Activated CD8-positive, alpha-beta T cell treated with anti-CD3 and anti-CD28 coated beads for 36 hours (primary cell): ENCODE measurements at regions of chrX and their contacts with region 1.

Region 1: GRCh38 chrX:103831803-103832544 is at the start of gene RAB9B:
- DNase-seq: peak; percentile 74
- ATAC-seq: peak; percentile 99
- H3K4me3 Mint-ChIP-seq: peak within 1 kb of the TSS; percentile 76
- H3K27ac Mint-ChIP-seq: peak within 1 kb of the TSS; percentile 63
- H3K4me1 Mint-ChIP-seq: peaks cover 3% of the 10 kb centered on the region
- H3K27me3 Mint-ChIP-seq: peaks cover 8% of the 10 kb centered on the region
- CTCF ChIP-seq: no peak
- total RNA-seq, gene RAB9B: 0.38 to 0.45 TPM

Region 2: DNA sequence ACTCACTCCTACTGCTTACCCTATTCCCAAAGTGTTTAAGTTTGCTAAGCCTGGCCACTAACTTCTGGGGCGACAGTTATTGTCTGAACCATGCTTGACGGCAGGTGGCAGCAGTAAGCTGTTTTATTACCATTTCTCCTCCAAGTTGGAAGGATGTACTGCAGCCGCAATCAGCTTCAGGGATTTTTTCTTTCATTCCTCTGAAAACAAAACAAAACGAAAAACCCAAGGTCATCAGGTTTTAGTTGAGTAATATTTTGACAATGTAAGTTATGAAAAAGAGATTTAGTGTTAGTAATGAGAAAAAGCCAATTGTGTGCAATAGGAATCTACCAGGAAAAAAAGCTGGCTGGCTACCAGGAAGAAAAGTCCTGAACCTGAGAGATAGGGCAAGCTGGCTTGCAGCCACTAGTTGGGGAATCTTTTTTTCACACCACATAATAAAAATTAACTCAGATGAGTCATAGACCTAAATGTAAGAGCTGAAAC is 13.2 kb after region 1 on chrX:
- CTCF ChIA-PET with region 1: interaction called, 12 read pairs
- POLR2A ChIA-PET with region 1: interaction called, 5 read pairs
- intact Hi-C with region 1: no loop called
- DNase-seq: peak; percentile 62
- ATAC-seq: peak; percentile 58
- H3K4me3 Mint-ChIP-seq: no peak overlapping the region
- H3K27ac Mint-ChIP-seq: no peak overlapping the region
- H3K4me1 Mint-ChIP-seq: no peaks in the 10 kb centered on the region
- H3K27me3 Mint-ChIP-seq: peaks cover 5% of the 10 kb centered on the region
- CTCF ChIP-seq: peak; percentile 66

Region 3: DNA sequence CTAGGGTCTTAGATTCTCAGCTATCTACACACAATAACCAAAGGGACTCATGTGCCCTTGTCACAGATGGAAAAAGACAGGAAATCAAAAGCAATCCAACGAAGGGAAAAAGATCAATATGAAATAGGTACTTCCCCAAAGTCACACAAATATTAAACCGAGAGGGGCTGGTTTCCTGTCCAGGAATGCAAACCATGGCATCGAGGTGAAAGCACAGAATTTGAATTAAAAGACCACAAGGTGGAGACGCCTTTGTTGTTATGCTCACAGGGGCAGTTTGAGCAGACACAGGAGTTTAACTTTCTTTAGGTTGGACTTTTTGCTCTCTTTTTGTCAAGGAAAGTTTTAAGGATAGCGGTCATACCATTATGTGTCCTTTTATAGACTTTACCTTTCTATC is 167.3 kb after region 1 on chrX:
- CTCF ChIA-PET with region 1: no interaction called
- POLR2A ChIA-PET with region 1: no interaction called
- intact Hi-C with region 1: no loop called
- DNase-seq: no peak
- ATAC-seq: no peak
- H3K4me3 Mint-ChIP-seq: no peak overlapping the region
- H3K27ac Mint-ChIP-seq: no peak overlapping the region
- H3K4me1 Mint-ChIP-seq: no peaks in the 10 kb centered on the region
- H3K27me3 Mint-ChIP-seq: no peaks in the 10 kb centered on the region
- CTCF ChIP-seq: no peak